ENCODE measurements at regions of chr6 and their contacts with region 1.

Region 1: GRCh38 chr6:391559-392440 is at the start of gene IRF4:
- DNase-seq: peak; percentile 83
- H3K4me3 Mint-ChIP-seq: peak within 1 kb of the TSS; percentile 94
- H3K27ac Mint-ChIP-seq: peak within 1 kb of the TSS; percentile 99
- H3K4me1 Mint-ChIP-seq: peaks cover 50% of the 10 kb centered on the region
- H3K27me3 Mint-ChIP-seq: peaks cover 5% of the 10 kb centered on the region
- total RNA-seq, gene IRF4: 689 to 705 TPM

Region 2: DNA sequence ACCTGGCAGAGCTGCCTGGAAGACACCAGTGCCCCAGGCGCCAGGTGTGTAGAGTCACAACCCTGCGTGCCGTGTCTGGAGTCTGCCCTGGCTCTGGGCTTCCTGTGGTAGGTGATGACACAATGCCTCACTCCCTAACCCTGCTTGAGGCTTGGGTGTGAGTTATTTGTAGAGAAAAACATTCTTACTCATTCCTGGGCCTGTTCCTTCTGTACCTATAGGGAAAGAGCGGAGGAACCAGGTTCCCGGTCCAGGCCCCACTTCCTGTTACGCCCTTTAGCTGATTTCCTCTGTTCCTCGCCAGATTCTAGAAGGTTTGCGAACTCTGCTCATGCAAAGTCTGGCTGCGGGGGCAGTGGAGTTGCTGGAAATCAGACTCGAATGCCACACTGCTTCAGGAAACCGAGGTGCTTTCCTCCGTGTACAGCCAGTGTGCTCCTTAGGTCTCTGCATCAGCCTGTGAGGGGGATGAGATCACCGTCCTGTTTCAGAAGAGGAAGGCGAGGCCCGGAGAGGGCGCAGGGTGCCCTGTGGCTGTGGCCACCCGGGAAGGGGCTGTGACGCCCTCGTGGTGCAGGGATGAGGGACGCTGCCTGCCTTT is 166.6 kb before region 1 on chr6:
- CTCF ChIA-PET with region 1: interaction called, 4 read pairs
- POLR2A ChIA-PET with region 1: interaction called, 22 read pairs
- intact Hi-C with region 1: loop called (anchors 1 kb)
- DNase-seq: peak; percentile 90
- H3K4me3 Mint-ChIP-seq: peak overlapping the region; percentile 54
- H3K27ac Mint-ChIP-seq: peak overlapping the region; percentile 96
- H3K4me1 Mint-ChIP-seq: peaks cover 72% of the 10 kb centered on the region
- H3K27me3 Mint-ChIP-seq: peaks cover 12% of the 10 kb centered on the region

Region 3: GRCh38 chr6:436308-437036 is 44.7 kb after region 1 on chr6:
- CTCF ChIA-PET with region 1: interaction called, 4 read pairs
- POLR2A ChIA-PET with region 1: interaction called, 5 read pairs
- intact Hi-C with region 1: loop called (anchors 5 kb)
- DNase-seq: no peak
- H3K4me3 Mint-ChIP-seq: no peak overlapping the region
- H3K27ac Mint-ChIP-seq: no peak overlapping the region
- H3K4me1 Mint-ChIP-seq: peaks cover 43% of the 10 kb centered on the region
- H3K27me3 Mint-ChIP-seq: no peaks in the 10 kb centered on the region

Region 4: GRCh38 chr6:490251-491037 is 98.6 kb after region 1 on chr6:
- CTCF ChIA-PET with region 1: interaction called, 5 read pairs
- POLR2A ChIA-PET with region 1: interaction called, 136 read pairs
- intact Hi-C with region 1: loop called (anchors 2 kb)
- DNase-seq: peak; percentile 76
- H3K4me3 Mint-ChIP-seq: peak overlapping the region; percentile 62
- H3K27ac Mint-ChIP-seq: peak overlapping the region; percentile 100
- H3K4me1 Mint-ChIP-seq: peaks cover 92% of the 10 kb centered on the region
- H3K27me3 Mint-ChIP-seq: no peaks in the 10 kb centered on the region

Region 5: DNA sequence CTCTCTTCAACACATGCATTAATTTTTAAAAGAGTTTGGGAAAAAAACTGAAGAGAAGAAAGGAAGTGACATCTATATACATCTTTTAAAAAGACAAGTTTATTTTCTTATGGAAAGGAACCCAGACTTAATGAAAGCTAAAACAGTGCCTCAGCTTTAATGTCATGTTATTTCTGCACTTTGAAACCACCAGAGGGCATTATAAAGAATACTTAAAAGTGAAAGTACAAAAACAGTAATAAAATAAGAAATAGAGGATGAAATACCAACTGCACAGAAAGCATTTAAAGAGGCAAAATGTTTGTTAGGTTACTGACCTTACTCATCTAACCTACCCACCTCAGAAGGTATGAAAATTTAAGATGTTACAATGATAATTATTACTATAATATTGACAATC is 166.3 kb after region 1 on chr6:
- CTCF ChIA-PET with region 1: interaction called, 3 read pairs
- POLR2A ChIA-PET with region 1: interaction called, 4 read pairs
- intact Hi-C with region 1: loop called (anchors 1 kb)
- DNase-seq: no peak
- H3K4me3 Mint-ChIP-seq: no peak overlapping the region
- H3K27ac Mint-ChIP-seq: peak overlapping the region; percentile 87
- H3K4me1 Mint-ChIP-seq: peaks cover 60% of the 10 kb centered on the region
- H3K27me3 Mint-ChIP-seq: no peaks in the 10 kb centered on the region

Region 6: GRCh38 chr6:786946-787763 is 395.4 kb after region 1 on chr6:
- CTCF ChIA-PET with region 1: no interaction called
- POLR2A ChIA-PET with region 1: no interaction called
- intact Hi-C with region 1: loop called (anchors 10 kb)
- DNase-seq: peak; percentile 37
- H3K4me3 Mint-ChIP-seq: no peak overlapping the region
- H3K27ac Mint-ChIP-seq: no peak overlapping the region
- H3K4me1 Mint-ChIP-seq: peaks cover 17% of the 10 kb centered on the region
- H3K27me3 Mint-ChIP-seq: peaks cover 10% of the 10 kb centered on the region